ENCODE measurements at regions of chr1 and their contacts with region 1.

Region 1: GRCh38 chr1:155717041-155717440 is 28.1 kb downstream of the DAP3 start:
- DNase-seq: no peak
- H3K4me3 Mint-ChIP-seq: no peak overlapping the region
- H3K27ac Mint-ChIP-seq: no peak overlapping the region
- H3K4me1 Mint-ChIP-seq: no peaks in the 10 kb centered on the region
- H3K27me3 Mint-ChIP-seq: no peaks in the 10 kb centered on the region
- CTCF ChIP-seq: no peak

Region 2: GRCh38 chr1:155706091-155706619 is 10.9 kb before region 1 on chr1:
- CTCF ChIA-PET with region 1: no interaction called
- intact Hi-C with region 1: no loop called
- DNase-seq: no peak
- H3K4me3 Mint-ChIP-seq: no peak overlapping the region
- H3K27ac Mint-ChIP-seq: no peak overlapping the region
- H3K4me1 Mint-ChIP-seq: no peaks in the 10 kb centered on the region
- H3K27me3 Mint-ChIP-seq: no peaks in the 10 kb centered on the region
- CTCF ChIP-seq: no peak

Region 3: DNA sequence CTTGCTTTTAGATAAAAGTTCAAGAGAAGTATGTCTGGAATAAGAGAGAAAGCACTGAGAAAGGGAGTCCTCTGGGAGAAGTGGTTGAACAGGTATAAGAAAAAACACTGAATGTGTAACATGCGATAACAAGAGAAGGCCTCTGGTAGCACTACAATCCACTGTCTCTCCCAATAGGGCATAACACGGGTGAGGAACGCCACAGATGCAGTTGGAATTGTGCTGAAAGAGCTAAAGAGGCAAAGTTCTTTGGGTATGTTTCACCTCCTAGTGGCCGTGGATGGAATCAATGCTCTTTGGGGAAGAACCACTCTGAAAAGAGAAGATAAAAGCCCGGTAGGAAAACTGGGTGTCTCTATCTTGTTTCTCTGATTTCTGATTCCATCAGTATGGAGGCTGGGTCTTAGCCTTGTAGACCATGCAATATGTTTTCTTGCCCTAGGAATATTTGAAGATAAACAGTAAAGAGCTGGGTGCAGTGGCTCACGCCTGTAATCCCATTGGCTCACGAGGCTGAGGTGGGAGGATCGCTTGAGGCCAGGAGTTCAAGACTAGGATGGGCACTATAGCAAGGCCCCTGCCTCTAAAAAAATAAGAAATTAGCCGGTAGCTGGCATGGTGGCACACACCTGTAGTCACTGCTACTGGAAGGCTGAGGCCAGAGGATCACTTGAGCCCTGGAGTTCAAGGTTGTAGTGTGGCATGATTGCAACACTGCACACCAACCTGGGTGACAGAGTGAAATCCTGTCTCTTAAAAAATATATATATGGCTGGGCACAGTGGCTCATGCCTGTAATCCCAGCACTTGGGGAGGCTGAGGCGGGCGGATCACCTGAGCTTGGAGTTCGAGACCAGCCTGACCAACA is 12.2 kb after region 1 on chr1:
- CTCF ChIA-PET with region 1: interaction called, 11 read pairs
- intact Hi-C with region 1: no loop called
- DNase-seq: peak; percentile 58
- H3K4me3 Mint-ChIP-seq: no peak overlapping the region
- H3K27ac Mint-ChIP-seq: no peak overlapping the region
- H3K4me1 Mint-ChIP-seq: no peaks in the 10 kb centered on the region
- H3K27me3 Mint-ChIP-seq: no peaks in the 10 kb centered on the region
- CTCF ChIP-seq: peak; percentile 76

Region 4: DNA sequence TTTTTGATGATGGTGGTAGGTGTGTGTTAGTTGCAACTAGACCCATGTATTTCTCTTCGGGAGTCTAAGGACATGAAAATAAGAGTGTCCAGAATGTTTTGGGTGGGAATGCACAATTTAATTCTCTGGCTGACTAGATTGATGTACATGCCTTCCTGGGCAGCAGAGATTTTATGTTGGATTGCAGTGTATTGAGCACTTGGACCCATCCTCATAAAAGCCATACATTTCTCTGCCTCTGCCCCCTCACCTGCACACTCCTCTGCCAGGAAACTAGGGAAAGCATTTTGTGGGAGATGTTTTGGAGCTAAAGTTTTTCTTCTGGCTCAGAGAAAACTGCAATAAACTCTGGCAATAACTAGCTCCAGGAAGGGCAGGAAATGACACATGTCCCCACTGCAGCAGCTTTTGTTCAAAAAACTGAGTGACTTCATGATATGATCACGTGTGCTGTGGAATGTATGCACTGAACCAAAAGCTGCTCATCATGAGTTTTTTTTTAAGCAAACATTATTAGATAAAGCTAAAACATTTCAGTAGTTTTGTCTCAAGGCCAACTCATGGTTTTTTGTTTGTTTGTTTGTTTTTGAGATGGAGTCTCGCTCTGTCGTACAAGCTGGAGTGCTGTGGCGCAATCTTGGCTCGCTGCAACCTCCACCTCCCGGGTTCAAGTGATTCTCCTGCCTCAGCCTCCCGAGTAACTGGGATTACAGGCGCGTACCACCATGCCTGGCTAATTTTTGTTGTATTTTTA is 176.5 kb after region 1 on chr1:
- CTCF ChIA-PET with region 1: no interaction called
- intact Hi-C with region 1: no loop called
- DNase-seq: peak; percentile 43
- H3K4me3 Mint-ChIP-seq: peak overlapping the region; percentile 10
- H3K27ac Mint-ChIP-seq: peak overlapping the region; percentile 56
- H3K4me1 Mint-ChIP-seq: peaks cover 29% of the 10 kb centered on the region
- H3K27me3 Mint-ChIP-seq: no peaks in the 10 kb centered on the region
- CTCF ChIP-seq: no peak